Transverse colon (tissue), 4 donors: ENCODE measurements at regions of chr22 and their contacts with region 1.

Region 1: DNA sequence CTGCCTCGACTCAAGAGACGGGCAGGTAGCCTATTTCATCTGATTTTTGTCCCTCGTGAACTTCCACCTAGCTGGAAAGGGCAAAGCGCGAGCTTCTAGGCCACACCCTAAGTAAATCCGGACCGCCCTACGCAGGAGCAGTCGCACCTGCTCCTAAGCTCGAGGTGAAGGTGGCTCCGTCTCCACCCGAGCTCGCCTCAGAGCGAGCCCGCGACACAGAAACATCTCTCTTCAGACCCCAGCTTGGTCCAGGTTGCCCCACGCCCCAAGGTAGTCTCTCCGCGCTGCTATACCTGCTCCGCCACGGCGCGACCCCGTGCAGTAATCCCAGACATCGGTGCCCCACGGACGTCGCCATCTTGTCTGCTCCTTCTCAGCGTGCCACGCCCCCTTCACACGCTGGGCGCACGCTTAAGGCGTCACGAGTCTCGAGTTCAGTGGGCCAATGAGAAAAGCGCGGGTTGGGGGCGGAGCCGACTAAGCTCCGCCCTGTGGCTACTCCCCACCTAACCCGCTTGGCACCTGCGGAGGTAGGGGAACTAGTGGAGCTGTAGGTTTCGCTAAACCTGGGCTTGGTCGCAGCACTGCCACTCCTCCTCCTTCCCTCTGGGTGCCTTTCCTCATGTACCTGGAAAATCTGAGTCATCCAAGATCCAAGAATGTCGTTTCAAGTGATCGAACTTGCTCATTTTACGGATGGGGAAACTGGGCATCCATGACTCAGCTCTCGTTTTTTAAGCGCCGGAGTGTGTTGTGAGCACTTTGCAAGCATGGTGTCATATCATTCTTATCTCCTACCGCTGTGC is at the start of gene PISD:
- DNase-seq: peak; percentile 98
- H3K4me3 ChIP-seq: peak within 1 kb of the TSS; percentile 63 to 97 (median 78)
- H3K27ac ChIP-seq: peak within 1 kb of the TSS; percentile 80 to 86 (median 84)
- H3K4me1 ChIP-seq: peaks cover 9 to 17% (median 14%) of the 10 kb centered on the region in 4 donors
- H3K27me3 ChIP-seq: no peaks in the 10 kb centered on the region
- CTCF ChIP-seq: no peak
- EP300 ChIP-seq: no peak
- POLR2A ChIP-seq: peak; percentile 90
- total RNA-seq, gene PISD: 33.7 to 111 (median 47.7) TPM

Region 2: GRCh38 chr22:31544481-31545480 is 117.3 kb before region 1 on chr22:
- in situ Hi-C with region 1: no loop called
- intact Hi-C with region 1: no loop called
- DNase-seq: no peak
- H3K4me3 ChIP-seq: no peak overlapping the region
- H3K27ac ChIP-seq: no peak overlapping the region
- H3K4me1 ChIP-seq: no peaks in the 10 kb centered on the region
- H3K27me3 ChIP-seq: no peaks in the 10 kb centered on the region
- CTCF ChIP-seq: no peak
- EP300 ChIP-seq: no peak
- POLR2A ChIP-seq: no peak

Region 3: GRCh38 chr22:31943976-31944699 is 282.1 kb after region 1 on chr22 and contains the start of gene YWHAH:
- in situ Hi-C with region 1: loop called in 1 of 4 experiments (anchors 25 kb)
- intact Hi-C with region 1: no loop called
- DNase-seq: peak; percentile 98
- H3K4me3 ChIP-seq: peak within 1 kb of the TSS; percentile 47 to 93 (median 78)
- H3K27ac ChIP-seq: peak within 1 kb of the TSS; percentile 98 to 100 (median 100)
- H3K4me1 ChIP-seq: peaks cover 8 to 33% (median 21%) of the 10 kb centered on the region in 4 donors
- H3K27me3 ChIP-seq: no peaks in the 10 kb centered on the region
- CTCF ChIP-seq: no peak
- EP300 ChIP-seq: no peak
- POLR2A ChIP-seq: peak; percentile 58
- total RNA-seq, gene YWHAH: 83.7 to 155 (median 109) TPM

Region 4: GRCh38 chr22:32489377-32489776 is 827.3 kb after region 1 on chr22:
- in situ Hi-C with region 1: no loop called
- intact Hi-C with region 1: no loop called
- DNase-seq: no peak
- H3K4me3 ChIP-seq: no peak overlapping the region
- H3K27ac ChIP-seq: no peak overlapping the region
- H3K4me1 ChIP-seq: no peaks in the 10 kb centered on the region
- H3K27me3 ChIP-seq: no peaks in the 10 kb centered on the region
- CTCF ChIP-seq: no peak
- EP300 ChIP-seq: no peak
- POLR2A ChIP-seq: no peak